ENCODE measurements at regions of chr1 and their contacts with region 1.

Region 1: DNA sequence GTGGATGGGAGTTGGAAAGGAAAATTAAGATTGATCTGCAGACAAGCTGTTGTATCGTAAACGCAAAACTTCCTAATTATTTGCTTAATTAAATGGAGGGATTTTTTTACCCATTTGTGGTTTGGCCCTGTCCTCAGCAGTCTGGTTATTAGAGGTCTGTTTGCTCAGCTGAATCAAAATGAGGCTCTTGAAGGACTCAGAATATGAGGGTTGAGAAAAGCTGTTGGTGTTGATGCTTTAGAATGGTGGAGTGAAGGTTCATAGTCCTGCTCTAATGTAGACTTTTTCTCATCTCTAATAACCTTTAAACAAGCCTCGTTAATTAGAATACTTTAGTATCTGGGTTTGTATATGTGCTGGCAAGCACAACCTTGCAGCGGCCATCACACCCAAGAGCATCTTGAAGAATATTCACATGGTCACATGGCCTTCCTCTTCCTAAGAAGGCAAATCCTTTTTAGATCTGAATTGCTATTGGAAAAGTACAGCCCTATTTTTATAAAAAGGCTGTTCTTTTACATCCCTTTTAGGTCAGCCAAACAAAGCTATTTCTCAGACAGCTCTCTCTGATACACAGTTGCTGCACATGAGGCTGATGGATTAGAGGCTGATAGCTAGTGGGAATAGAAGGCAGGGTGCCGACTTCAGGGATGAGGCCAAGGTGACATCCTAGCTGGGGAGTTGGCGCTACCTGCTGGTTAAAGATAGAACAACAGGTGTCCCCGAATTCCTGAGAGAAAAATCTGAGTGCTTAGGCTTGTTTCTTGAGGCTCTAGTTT is 53.8 kb downstream of the MACF1 start:
- DNase-seq: peak; percentile 80
- H3K4me3 ChIP-seq: no peak overlapping the region; a peak in 1 of 4 replicates
- H3K27ac ChIP-seq: peak overlapping the region; percentile 5 to 48; a peak in 1 of 4 replicates
- H3K4me1 ChIP-seq: peaks cover 10 to 11% of the 10 kb centered on the region in 2 experiments
- H3K27me3 ChIP-seq: no peaks in the 10 kb centered on the region
- CTCF ChIP-seq: peak; percentile 86
- EP300 ChIP-seq: no peak
- RAD21 ChIP-seq: peak; percentile 89

Region 2: GRCh38 chr1:39277879-39278278 is 19.5 kb after region 1 on chr1:
- CTCF ChIA-PET with region 1: interaction called, 12 read pairs
- POLR2A ChIA-PET with region 1: no interaction called
- DNase-seq: no peak
- H3K4me3 ChIP-seq: no peak overlapping the region
- H3K27ac ChIP-seq: no peak overlapping the region; a peak in 1 of 4 replicates
- H3K4me1 ChIP-seq: peaks cover 0 to 5% of the 10 kb centered on the region in 2 experiments; a peak in 1 of 4 replicates
- H3K27me3 ChIP-seq: no peaks in the 10 kb centered on the region
- CTCF ChIP-seq: no peak
- EP300 ChIP-seq: peak in 1 of 2 experiments; percentile 56; a peak in 1 of 4 replicates
- RAD21 ChIP-seq: no peak

Measured in SK-N-SH (cell line).